Naive thymus-derived CD4-positive, alpha-beta T cell (primary cell): ENCODE measurements at regions of chr16 and their contacts with region 1.

Region 1: GRCh38 chr16:11407047-11407982 is 62.1 kb downstream of the RMI2 start:
- DNase-seq: peak; percentile 44 to 78 (median 66)
- ATAC-seq: peak; percentile 85
- H3K4me3 ChIP-seq: no peak overlapping the region
- H3K4me3 Mint-ChIP-seq: no peak overlapping the region
- H3K27ac ChIP-seq: no peak overlapping the region
- H3K27ac Mint-ChIP-seq: peak overlapping the region in 2 of 9 donors; percentile 16 to 72
- H3K4me1 ChIP-seq: no peaks in the 10 kb centered on the region
- H3K4me1 Mint-ChIP-seq: peaks cover 0 to 5% (median 4%) of the 10 kb centered on the region in 7 donors
- H3K27me3 ChIP-seq: no peaks in the 10 kb centered on the region
- H3K27me3 Mint-ChIP-seq: no peaks in the 10 kb centered on the region

Region 2: DNA sequence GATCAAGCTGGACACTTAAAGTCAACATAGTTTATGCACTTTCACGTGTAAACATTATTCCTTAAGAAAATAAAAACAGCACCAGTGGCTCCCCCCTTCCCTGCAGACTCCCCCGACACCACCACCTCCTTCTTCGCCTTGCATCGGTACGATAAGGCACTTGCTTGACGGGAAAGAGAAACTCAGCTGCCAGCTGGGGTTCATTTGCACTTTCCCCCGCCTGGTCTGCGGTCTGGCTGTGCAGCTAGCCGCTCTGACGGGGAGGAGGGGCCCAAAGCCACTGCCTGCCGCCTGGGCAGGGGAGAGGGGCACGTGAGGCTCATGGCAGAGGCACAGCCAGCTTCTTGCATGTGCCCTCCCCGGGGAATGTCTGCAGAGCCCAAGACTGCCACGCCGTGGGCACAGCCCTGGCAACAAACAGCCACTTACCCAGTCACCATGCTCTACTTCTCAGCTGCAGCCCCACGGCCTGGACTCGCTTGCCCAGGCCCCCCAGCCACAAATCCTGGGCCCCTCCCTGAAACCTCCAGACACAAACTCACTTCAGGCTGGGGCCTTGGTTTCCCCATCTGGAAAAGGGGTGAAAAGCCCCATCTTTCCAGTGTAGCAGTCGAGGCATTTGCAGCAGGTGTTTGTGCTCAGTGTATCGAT is 109.7 kb before region 1 on chr16:
- CTCF ChIA-PET with region 1: no interaction called
- POLR2A ChIA-PET with region 1: no interaction called
- intact Hi-C with region 1: no loop called
- DNase-seq: peak; percentile 50 to 70 (median 65)
- ATAC-seq: peak; percentile 95
- H3K4me3 ChIP-seq: peak overlapping the region; percentile 49
- H3K4me3 Mint-ChIP-seq: peak overlapping the region; percentile 76 to 87 (median 80)
- H3K27ac ChIP-seq: no peak overlapping the region
- H3K27ac Mint-ChIP-seq: peak overlapping the region; percentile 63 to 87 (median 77)
- H3K4me1 ChIP-seq: peaks cover 8% of the 10 kb centered on the region in 2 donors
- H3K4me1 Mint-ChIP-seq: peaks cover 9 to 53% (median 25%) of the 10 kb centered on the region in 7 donors
- H3K27me3 ChIP-seq: no peaks in the 10 kb centered on the region
- H3K27me3 Mint-ChIP-seq: peaks cover 0 to 19% (median 0%) of the 10 kb centered on the region in 5 donors

Region 3: DNA sequence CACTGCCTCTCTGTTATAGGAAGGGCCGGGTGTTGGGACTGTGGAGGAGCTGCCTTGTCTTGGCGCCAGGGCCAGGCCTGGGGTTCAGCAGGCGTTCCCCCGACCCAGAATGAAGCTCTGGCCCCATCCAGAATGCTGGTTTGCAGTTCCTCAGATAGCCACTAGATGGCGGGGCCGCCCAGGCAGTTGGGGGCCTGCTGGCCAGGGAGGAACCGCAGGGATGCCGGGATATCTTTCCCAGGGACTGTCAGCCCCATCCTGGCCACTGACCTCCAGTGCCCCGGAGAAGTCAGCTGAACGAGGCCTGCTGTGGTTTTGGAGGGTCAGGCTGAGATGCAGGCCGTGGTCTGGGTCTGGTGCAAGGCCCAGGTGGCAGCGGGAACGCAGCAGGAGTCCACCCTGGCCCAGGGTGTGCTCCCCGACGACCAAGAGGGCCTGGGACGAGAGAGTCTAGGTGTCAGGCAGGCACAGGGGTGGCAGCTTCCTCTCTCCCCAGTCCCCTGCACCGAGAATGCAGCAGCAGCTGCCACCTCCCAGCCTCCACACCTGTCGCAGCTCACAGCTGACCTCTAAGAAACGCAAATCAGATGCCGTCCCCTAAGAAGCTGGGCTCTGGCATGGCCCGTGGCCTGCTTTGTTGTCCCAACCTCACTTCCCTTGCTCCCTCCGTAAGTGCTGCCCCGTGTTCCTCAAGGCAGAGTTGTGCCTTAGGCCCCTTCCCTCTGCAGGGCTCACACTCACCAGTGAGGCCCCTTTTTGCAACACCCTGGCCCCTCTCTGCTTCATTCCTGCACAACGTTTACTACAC is 10.9 kb before region 1 on chr16:
- CTCF ChIA-PET with region 1: interaction called, 13 read pairs
- POLR2A ChIA-PET with region 1: no interaction called
- intact Hi-C with region 1: no loop called
- DNase-seq: peak; percentile 32 to 77 (median 58)
- ATAC-seq: peak; percentile 80
- H3K4me3 ChIP-seq: no peak overlapping the region
- H3K4me3 Mint-ChIP-seq: no peak overlapping the region
- H3K27ac ChIP-seq: no peak overlapping the region
- H3K27ac Mint-ChIP-seq: no peak overlapping the region
- H3K4me1 ChIP-seq: peaks cover 0 to 3% of the 10 kb centered on the region in 2 donors
- H3K4me1 Mint-ChIP-seq: peaks cover 0 to 5% (median 2%) of the 10 kb centered on the region in 7 donors
- H3K27me3 ChIP-seq: no peaks in the 10 kb centered on the region
- H3K27me3 Mint-ChIP-seq: no peaks in the 10 kb centered on the region

Region 4: DNA sequence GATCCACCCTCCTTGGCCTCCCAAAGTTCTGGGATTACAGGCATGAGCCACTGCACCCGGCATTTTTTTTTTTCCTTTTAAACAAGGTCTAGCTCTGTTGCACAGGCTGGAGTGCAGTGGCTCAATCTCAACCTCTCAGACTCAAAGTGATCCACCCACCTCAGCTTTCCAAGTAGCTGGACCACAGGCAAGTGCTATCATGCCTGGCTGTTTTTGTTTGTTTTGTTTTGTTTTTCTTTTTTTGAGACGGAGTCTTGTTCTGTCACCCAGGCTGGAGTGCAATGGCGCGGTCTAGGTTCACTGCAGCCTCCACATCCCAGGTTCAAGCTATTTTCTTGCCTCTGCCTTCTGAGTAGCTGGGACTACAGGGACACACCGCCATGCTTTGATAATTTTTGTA is 408.8 kb after region 1 on chr16:
- CTCF ChIA-PET with region 1: no interaction called
- POLR2A ChIA-PET with region 1: no interaction called
- intact Hi-C with region 1: loop called in 1 of 2 experiments (anchors 1 kb)
- DNase-seq: no peak
- ATAC-seq: no peak
- H3K4me3 ChIP-seq: no peak overlapping the region
- H3K4me3 Mint-ChIP-seq: no peak overlapping the region
- H3K27ac ChIP-seq: no peak overlapping the region
- H3K27ac Mint-ChIP-seq: no peak overlapping the region
- H3K4me1 ChIP-seq: no peaks in the 10 kb centered on the region
- H3K4me1 Mint-ChIP-seq: peaks cover 0 to 6% (median 3%) of the 10 kb centered on the region in 7 donors
- H3K27me3 ChIP-seq: no peaks in the 10 kb centered on the region
- H3K27me3 Mint-ChIP-seq: no peaks in the 10 kb centered on the region